ENCODE measurements at regions of chr4 and their contacts with region 1.

Region 1: GRCh38 chr4:110211007-110211769 is 12.8 kb upstream of the ELOVL6 start:
- DNase-seq: no peak
- ATAC-seq: no peak

Region 2: GRCh38 chr4:110175634-110176033 is 35.6 kb before region 1 on chr4:
- intact Hi-C with region 1: loop called (anchors 2 kb)
- DNase-seq: no peak
- ATAC-seq: no peak

Region 3: DNA sequence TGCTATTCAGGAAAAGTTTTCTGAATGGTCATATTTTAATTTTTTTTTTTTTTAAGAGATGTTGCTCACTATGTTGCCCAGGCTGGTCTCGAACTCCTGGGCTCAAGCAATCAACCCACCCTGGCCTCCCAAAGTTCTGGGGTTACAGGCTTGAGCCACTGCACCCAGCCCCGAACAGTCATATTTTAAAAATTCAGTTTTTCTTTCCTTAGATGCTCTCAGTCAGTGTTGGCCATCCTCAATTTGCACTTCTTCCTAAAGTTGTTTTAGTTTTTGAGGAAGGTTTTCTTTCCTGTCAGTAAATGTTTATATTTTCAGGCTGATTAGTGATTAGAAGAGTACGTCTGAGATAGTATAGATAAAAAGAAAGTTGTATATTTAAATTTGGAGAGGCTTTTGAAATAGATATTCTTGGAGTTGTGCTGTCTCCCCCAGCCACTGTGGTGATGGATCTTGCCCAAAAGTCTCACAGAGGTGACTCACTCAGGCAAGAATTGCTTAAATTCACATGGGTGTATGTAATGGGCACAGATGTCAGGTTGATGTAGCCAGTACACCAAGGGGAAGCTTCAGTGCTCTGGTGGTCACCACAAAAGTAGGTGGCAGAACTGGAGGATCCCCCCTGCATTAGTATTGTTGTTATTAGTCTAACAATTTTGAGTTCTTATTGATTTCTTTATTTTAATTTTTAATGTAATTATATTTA is 59.5 kb after region 1 on chr4:
- intact Hi-C with region 1: no loop called
- DNase-seq: no peak
- ATAC-seq: no peak